CD8-positive, alpha-beta T cell (primary cell): ENCODE measurements at regions of chr3 and their contacts with region 1.

Region 1: DNA sequence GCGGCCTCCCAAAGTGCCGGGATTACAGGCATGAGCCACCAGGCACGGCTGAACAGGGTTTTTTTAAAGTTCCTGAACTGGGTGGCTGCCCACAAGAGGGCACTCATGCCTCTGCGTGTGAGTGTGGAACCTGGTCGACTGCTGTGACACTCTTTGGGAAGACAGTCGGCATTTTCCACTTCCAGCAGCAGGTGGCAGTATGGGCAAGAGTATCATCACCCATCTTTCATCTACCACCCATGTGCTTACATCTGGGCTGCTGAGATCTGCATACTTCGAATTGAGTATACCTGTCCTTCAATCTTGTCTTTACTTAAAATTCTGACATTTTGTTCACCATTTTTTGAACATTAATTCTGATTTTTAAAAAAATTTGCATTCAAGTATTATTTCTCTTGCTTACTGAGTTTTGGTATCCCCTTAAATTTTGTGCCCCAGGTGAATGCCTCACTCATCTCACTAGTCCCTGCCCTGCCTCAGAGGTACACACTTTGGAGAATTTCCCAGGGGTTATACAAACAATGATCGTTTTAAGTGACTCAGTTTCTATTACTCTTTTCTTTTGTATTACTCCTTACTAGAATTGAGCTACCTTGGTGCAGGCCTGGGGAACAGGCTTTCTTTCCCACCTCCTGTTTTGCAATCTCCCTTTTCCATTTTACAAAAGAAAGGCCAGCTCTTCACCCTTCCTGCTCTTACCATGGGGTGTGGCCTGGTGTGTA is 11.8 kb downstream of the CLEC3B start:
- DNase-seq: peak; percentile 83 to 95 (median 90)
- ATAC-seq: peak; percentile 95
- H3K4me3 ChIP-seq: no peak overlapping the region
- H3K4me3 Mint-ChIP-seq: no peak overlapping the region
- H3K27ac ChIP-seq: no peak overlapping the region
- H3K27ac Mint-ChIP-seq: no peak overlapping the region
- H3K4me1 ChIP-seq: peaks cover 17% of the 10 kb centered on the region
- H3K4me1 Mint-ChIP-seq: peaks cover 41% of the 10 kb centered on the region
- H3K27me3 ChIP-seq: no peaks in the 10 kb centered on the region
- H3K27me3 Mint-ChIP-seq: peaks cover 36% of the 10 kb centered on the region
- CTCF ChIP-seq: peak; percentile 87

Region 2: GRCh38 chr3:45021148-45021923 is 16.6 kb before region 1 on chr3:
- CTCF ChIA-PET with region 1: interaction called, 12 read pairs
- POLR2A ChIA-PET with region 1: no interaction called
- intact Hi-C with region 1: no loop called
- DNase-seq: no peak
- ATAC-seq: no peak
- H3K4me3 ChIP-seq: no peak overlapping the region
- H3K4me3 Mint-ChIP-seq: no peak overlapping the region
- H3K27ac ChIP-seq: no peak overlapping the region
- H3K27ac Mint-ChIP-seq: no peak overlapping the region
- H3K4me1 ChIP-seq: peaks cover 14% of the 10 kb centered on the region
- H3K4me1 Mint-ChIP-seq: peaks cover 20% of the 10 kb centered on the region
- H3K27me3 ChIP-seq: no peaks in the 10 kb centered on the region
- H3K27me3 Mint-ChIP-seq: no peaks in the 10 kb centered on the region
- CTCF ChIP-seq: no peak

Region 3: GRCh38 chr3:45210308-45211041 is 172.6 kb after region 1 on chr3:
- CTCF ChIA-PET with region 1: interaction called, 597 read pairs
- POLR2A ChIA-PET with region 1: interaction called, 7 read pairs
- intact Hi-C with region 1: loop called (anchors 1 kb)
- DNase-seq: peak; percentile 51 to 88 (median 81)
- ATAC-seq: peak; percentile 93
- H3K4me3 ChIP-seq: no peak overlapping the region
- H3K4me3 Mint-ChIP-seq: no peak overlapping the region
- H3K27ac ChIP-seq: no peak overlapping the region
- H3K27ac Mint-ChIP-seq: no peak overlapping the region
- H3K4me1 ChIP-seq: peaks cover 8% of the 10 kb centered on the region
- H3K4me1 Mint-ChIP-seq: peaks cover 9% of the 10 kb centered on the region
- H3K27me3 ChIP-seq: peaks cover 0 to 6% of the 10 kb centered on the region in 2 experiments
- H3K27me3 Mint-ChIP-seq: peaks cover 28% of the 10 kb centered on the region
- CTCF ChIP-seq: peak; percentile 56

Region 4: DNA sequence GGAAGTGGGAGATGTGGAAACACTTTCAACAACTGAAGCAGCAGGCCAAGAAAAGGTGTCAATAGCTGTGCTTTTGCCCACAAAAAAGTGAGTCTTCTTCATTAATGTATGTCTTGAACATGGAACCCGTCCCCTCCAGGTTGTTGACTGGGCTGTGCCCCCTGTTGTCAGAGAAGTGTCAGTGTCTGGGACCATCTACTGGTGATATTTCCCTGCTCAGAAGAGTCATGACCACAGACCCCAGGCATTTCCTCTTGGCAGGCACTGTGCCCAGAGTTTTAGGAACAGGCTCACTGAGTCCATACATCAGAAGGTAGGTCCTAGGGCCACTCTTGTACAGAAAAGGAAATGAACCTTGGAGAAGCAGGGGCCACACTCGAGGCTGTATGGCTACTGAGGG is 295.7 kb after region 1 on chr3:
- CTCF ChIA-PET with region 1: no interaction called
- POLR2A ChIA-PET with region 1: no interaction called
- intact Hi-C with region 1: loop called in 1 of 2 experiments (anchors 5 kb)
- DNase-seq: no peak
- ATAC-seq: no peak
- H3K4me3 ChIP-seq: no peak overlapping the region
- H3K4me3 Mint-ChIP-seq: no peak overlapping the region
- H3K27ac ChIP-seq: no peak overlapping the region
- H3K27ac Mint-ChIP-seq: no peak overlapping the region
- H3K4me1 ChIP-seq: peaks cover 6% of the 10 kb centered on the region
- H3K4me1 Mint-ChIP-seq: peaks cover 10% of the 10 kb centered on the region
- H3K27me3 ChIP-seq: peaks cover 0 to 4% of the 10 kb centered on the region in 2 experiments
- H3K27me3 Mint-ChIP-seq: peaks cover 36% of the 10 kb centered on the region
- CTCF ChIP-seq: no peak

Region 5: DNA sequence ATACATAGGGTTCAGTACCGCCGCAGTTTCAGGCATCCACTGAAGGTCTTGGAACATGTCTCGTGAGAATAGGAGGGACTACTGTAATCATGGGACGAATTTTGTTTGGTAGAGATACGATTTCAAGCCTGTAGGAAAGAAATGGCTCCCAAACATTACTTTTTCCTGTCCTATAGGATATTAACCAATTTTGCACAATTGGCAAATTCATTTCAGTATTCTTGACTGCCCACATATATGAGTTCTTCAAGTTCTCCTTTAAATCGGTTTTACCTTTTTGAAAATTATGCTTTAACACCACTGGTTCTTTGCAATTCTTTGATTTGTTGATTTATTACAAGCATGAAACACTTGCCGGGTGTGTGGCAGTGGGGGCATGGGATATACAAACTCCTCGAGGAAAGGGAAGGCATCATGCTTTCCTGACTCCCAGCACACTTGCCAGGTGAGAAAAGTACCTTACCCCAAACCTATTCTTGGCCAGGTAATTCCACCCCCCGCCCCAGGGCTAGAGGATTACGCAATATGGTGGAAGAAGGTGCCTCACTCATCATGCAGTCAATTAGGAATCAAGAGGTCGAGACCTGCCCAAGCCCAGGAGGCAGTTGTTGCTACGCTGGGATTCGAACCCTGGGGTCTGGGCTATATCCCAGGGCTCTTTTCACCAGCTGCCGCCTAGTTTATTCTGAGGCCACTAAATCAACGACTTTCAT is 349.9 kb after region 1 on chr3:
- CTCF ChIA-PET with region 1: interaction called, 3 read pairs
- POLR2A ChIA-PET with region 1: no interaction called
- intact Hi-C with region 1: loop called in 1 of 2 experiments (anchors 1 kb)
- DNase-seq: no peak
- ATAC-seq: no peak
- H3K4me3 ChIP-seq: peak overlapping the region; percentile 91 to 96
- H3K4me3 Mint-ChIP-seq: peak overlapping the region; percentile 99
- H3K27ac ChIP-seq: peak overlapping the region; percentile 17 to 57
- H3K27ac Mint-ChIP-seq: peak overlapping the region; percentile 93
- H3K4me1 ChIP-seq: peaks cover 15% of the 10 kb centered on the region
- H3K4me1 Mint-ChIP-seq: peaks cover 23% of the 10 kb centered on the region
- H3K27me3 ChIP-seq: no peaks in the 10 kb centered on the region
- H3K27me3 Mint-ChIP-seq: no peaks in the 10 kb centered on the region
- CTCF ChIP-seq: no peak

Region 6: DNA sequence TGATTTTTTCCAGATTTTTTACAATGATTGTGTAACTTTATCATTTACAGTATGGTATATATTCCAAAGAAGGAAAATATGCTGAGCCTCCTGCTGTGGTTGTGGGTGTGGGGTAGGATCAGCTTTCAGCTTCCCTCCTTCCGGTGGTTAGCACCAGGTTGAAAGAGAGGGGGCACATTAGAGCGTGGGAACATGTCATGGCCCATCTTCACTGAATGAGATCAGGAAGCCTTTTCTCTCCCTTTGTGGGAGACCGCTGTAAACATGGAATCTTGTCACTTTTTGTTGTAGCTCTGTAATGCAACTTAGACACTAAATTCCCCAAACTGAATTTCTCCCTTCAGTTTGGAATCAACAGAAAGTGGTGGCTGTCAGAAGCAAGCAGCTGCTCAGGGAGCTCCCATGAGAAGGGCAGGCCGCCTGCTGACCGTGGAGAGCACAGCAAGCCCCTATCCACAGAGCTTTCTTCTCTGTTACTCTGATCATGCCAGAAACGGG is 470.0 kb after region 1 on chr3:
- CTCF ChIA-PET with region 1: interaction called, 11 read pairs
- POLR2A ChIA-PET with region 1: no interaction called
- intact Hi-C with region 1: no loop called
- DNase-seq: peak in 2 of 9 experiments; percentile 9 to 20
- ATAC-seq: peak; percentile 42
- H3K4me3 ChIP-seq: no peak overlapping the region
- H3K4me3 Mint-ChIP-seq: no peak overlapping the region
- H3K27ac ChIP-seq: no peak overlapping the region
- H3K27ac Mint-ChIP-seq: no peak overlapping the region
- H3K4me1 ChIP-seq: peaks cover 12% of the 10 kb centered on the region
- H3K4me1 Mint-ChIP-seq: peaks cover 8% of the 10 kb centered on the region
- H3K27me3 ChIP-seq: no peaks in the 10 kb centered on the region
- H3K27me3 Mint-ChIP-seq: no peaks in the 10 kb centered on the region
- CTCF ChIP-seq: no peak

Region 7: DNA sequence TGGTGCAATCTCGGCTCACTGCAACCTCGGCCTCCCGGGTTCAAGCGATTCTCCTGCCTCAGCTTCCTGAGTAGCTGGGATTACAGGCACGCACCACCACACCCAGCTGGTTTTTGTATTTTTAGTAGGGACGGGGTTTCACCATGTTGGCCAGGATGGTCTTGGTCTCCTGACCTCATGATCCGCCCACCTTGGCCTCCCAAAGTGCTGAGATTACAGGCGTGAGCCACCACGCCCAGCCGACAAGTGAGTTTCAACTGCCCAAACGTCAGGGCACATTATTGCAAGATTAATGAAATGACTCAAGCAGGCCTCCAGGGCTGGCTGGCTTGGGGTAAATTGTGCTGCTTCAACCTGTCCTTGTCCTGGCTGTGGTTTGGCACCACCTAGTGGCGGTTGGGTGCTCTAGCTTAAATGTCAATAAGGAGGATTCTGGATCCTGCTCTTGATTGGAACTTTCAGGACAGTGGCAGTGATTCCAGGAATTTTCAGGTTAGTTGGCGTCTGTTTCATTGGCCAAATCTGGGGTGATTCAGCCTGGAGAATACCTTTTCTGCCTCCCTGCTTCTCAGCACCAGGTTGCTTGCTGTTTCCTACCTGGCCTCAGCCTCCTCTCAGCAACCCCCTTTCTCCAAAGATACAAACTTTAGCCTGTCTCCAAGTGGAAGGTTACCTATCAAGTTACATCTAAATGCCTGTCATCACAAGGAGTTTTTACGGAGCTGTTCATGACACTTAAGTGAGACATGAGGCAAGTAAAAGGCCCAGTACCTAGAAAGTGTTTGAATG is 618.9 kb after region 1 on chr3:
- CTCF ChIA-PET with region 1: interaction called, 31 read pairs
- POLR2A ChIA-PET with region 1: no interaction called
- intact Hi-C with region 1: loop called (anchors 1 kb)
- DNase-seq: peak; percentile 73 to 90 (median 87)
- ATAC-seq: peak; percentile 94
- H3K4me3 ChIP-seq: no peak overlapping the region
- H3K4me3 Mint-ChIP-seq: no peak overlapping the region
- H3K27ac ChIP-seq: no peak overlapping the region
- H3K27ac Mint-ChIP-seq: no peak overlapping the region
- H3K4me1 ChIP-seq: no peaks in the 10 kb centered on the region
- H3K4me1 Mint-ChIP-seq: peaks cover 14% of the 10 kb centered on the region
- H3K27me3 ChIP-seq: no peaks in the 10 kb centered on the region
- H3K27me3 Mint-ChIP-seq: no peaks in the 10 kb centered on the region
- CTCF ChIP-seq: peak; percentile 77